Activated CD4-positive, alpha-beta T cell treated with anti-CD3 and anti-CD28 coated beads, Interleukin-2, amount 10 ng/mL, durations not matched to agents 24 days and 14 days (primary cell): ENCODE measurements at regions of chr12 and their contacts with region 1.

Region 1: GRCh38 chr12:8890313-8891085 is 23.8 kb upstream of the PHC1 start:
- DNase-seq: peak; percentile 91
- H3K4me3 Mint-ChIP-seq: peak overlapping the region; percentile 84
- H3K27ac Mint-ChIP-seq: no peak overlapping the region
- H3K4me1 Mint-ChIP-seq: peaks cover 10% of the 10 kb centered on the region
- H3K27me3 Mint-ChIP-seq: peaks cover 19% of the 10 kb centered on the region

Region 2: DNA sequence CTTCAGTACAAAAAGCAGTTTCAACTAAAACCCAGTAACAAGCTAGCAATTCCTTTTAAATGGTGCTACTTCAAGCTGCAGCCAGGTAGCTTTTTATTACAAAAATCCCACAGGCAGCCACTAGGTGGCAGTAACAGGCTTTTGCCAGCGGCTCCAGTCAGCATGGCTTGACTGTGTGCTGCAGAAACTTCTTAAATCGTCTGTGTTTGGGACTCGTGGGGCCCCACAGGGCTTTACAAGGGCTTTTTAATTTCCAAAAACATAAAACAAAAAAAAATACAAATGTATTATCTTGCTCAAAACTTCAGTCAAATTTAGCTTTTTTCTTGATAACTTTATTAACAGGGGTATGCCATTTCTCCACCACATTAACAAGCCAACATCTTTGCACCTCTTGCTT is 346.2 kb before region 1 on chr12:
- intact Hi-C with region 1: loop called (anchors 2 kb)
- DNase-seq: peak; percentile 92
- H3K4me3 Mint-ChIP-seq: no peak overlapping the region
- H3K27ac Mint-ChIP-seq: no peak overlapping the region
- H3K4me1 Mint-ChIP-seq: peaks cover 2% of the 10 kb centered on the region
- H3K27me3 Mint-ChIP-seq: peaks cover 42% of the 10 kb centered on the region

Region 3: GRCh38 chr12:8662593-8662992 is 227.9 kb before region 1 on chr12 and contains the start of gene MFAP5:
- intact Hi-C with region 1: loop called (anchors 2 kb)
- DNase-seq: no peak
- H3K4me3 Mint-ChIP-seq: no peak within 1 kb of the TSS
- H3K27ac Mint-ChIP-seq: no peak within 1 kb of the TSS
- H3K4me1 Mint-ChIP-seq: no peaks in the 10 kb centered on the region
- H3K27me3 Mint-ChIP-seq: peaks cover 27% of the 10 kb centered on the region
- total RNA-seq, gene MFAP5: not detected in 2 replicates

Region 4: GRCh38 chr12:8681041-8681902 is 209.2 kb before region 1 on chr12:
- intact Hi-C with region 1: loop called (anchors 1 kb)
- DNase-seq: no peak
- H3K4me3 Mint-ChIP-seq: no peak overlapping the region
- H3K27ac Mint-ChIP-seq: no peak overlapping the region
- H3K4me1 Mint-ChIP-seq: no peaks in the 10 kb centered on the region
- H3K27me3 Mint-ChIP-seq: peaks cover 11% of the 10 kb centered on the region

Region 5: GRCh38 chr12:9039397-9039977 is 149.0 kb after region 1 on chr12:
- intact Hi-C with region 1: loop called (anchors 2 kb)
- DNase-seq: peak; percentile 76
- H3K4me3 Mint-ChIP-seq: no peak overlapping the region
- H3K27ac Mint-ChIP-seq: no peak overlapping the region
- H3K4me1 Mint-ChIP-seq: peaks cover 19% of the 10 kb centered on the region
- H3K27me3 Mint-ChIP-seq: peaks cover 12% of the 10 kb centered on the region